Mucosa of descending colon (tissue), 3 donors: ENCODE measurements at regions of chr16 and their contacts with region 1.

Region 1: DNA sequence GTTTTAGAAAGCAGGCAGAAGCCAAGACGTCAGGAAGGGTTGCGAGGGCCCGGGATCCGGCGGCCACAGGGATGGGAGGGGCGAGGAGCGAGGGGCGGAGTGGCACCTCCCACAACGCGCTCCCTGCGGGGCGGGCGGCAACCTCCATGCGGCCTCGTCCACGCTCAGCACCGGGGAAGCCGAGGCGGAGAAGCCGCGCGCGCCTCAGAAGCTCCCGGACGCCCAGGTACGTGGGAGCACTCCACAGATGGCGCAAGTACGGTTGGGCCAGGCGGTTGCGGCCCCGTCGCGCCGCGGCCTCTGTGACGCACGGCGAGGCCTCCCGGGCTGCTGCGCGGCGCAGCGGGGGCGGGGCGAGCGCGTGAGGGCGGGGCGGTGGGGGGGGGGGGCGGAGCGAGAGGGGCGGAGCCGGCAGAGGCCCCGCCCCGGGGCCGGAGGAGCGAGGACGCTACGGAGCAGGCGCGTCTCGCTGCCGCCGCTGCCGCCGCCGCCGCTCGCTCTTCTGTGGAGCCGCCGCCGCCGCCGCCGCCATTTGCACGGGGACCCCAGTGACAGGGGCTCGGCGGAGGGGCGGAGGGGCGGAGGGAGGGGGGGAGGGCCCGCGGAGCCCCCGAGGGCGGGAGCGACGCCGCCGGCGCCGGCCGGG is at the start of gene TENT4B:
- DNase-seq: peak; percentile 87 to 94 (median 93)
- ATAC-seq: peak; percentile 93
- H3K4me3 ChIP-seq: peak within 1 kb of the TSS; percentile 79
- H3K4me1 ChIP-seq: peaks cover 18% of the 10 kb centered on the region
- CTCF ChIP-seq: no peak
- total RNA-seq, gene TENT4B: 10.6 to 20.0 (median 11.5) TPM

Region 2: GRCh38 chr16:50038756-50039529 is 114.0 kb before region 1 on chr16:
- intact Hi-C with region 1: loop called in 1 of 2 experiments (anchors 5 kb)
- DNase-seq: peak; percentile 56 to 67 (median 65)
- ATAC-seq: peak; percentile 91
- H3K4me3 ChIP-seq: no peak overlapping the region
- H3K4me1 ChIP-seq: peaks cover 30% of the 10 kb centered on the region
- CTCF ChIP-seq: no peak

Region 3: GRCh38 chr16:50202926-50203624 is 50.1 kb after region 1 on chr16:
- intact Hi-C with region 1: loop called in 1 of 2 experiments (anchors 10 kb)
- DNase-seq: peak in 1 of 3 donors; percentile 43
- ATAC-seq: peak; percentile 87
- H3K4me3 ChIP-seq: no peak overlapping the region
- H3K4me1 ChIP-seq: peaks cover 18% of the 10 kb centered on the region
- CTCF ChIP-seq: no peak